ENCODE measurements at regions of chr19 and their contacts with region 1.

Region 1: GRCh38 chr19:20167020-20167644 is at the start of gene ZNF486:
- DNase-seq: peak; percentile 92
- H3K4me3 Mint-ChIP-seq: peak within 1 kb of the TSS; percentile 95
- H3K27ac Mint-ChIP-seq: peak within 1 kb of the TSS; percentile 87
- H3K4me1 Mint-ChIP-seq: peaks cover 20% of the 10 kb centered on the region
- H3K27me3 Mint-ChIP-seq: no peaks in the 10 kb centered on the region
- total RNA-seq, gene ZNF486: 7.3 to 8.7 TPM

Region 2: GRCh38 chr19:19821366-19821951 is 345.7 kb before region 1 on chr19 and contains the start of gene ZNF506:
- CTCF ChIA-PET with region 1: no interaction called
- POLR2A ChIA-PET with region 1: interaction called, 18 read pairs
- DNase-seq: peak; percentile 96
- H3K4me3 Mint-ChIP-seq: peak within 1 kb of the TSS; percentile 99
- H3K27ac Mint-ChIP-seq: peak within 1 kb of the TSS; percentile 99
- H3K4me1 Mint-ChIP-seq: peaks cover 29% of the 10 kb centered on the region
- H3K27me3 Mint-ChIP-seq: no peaks in the 10 kb centered on the region
- total RNA-seq, gene ZNF506: 24.6 to 25.5 TPM

Region 3: DNA sequence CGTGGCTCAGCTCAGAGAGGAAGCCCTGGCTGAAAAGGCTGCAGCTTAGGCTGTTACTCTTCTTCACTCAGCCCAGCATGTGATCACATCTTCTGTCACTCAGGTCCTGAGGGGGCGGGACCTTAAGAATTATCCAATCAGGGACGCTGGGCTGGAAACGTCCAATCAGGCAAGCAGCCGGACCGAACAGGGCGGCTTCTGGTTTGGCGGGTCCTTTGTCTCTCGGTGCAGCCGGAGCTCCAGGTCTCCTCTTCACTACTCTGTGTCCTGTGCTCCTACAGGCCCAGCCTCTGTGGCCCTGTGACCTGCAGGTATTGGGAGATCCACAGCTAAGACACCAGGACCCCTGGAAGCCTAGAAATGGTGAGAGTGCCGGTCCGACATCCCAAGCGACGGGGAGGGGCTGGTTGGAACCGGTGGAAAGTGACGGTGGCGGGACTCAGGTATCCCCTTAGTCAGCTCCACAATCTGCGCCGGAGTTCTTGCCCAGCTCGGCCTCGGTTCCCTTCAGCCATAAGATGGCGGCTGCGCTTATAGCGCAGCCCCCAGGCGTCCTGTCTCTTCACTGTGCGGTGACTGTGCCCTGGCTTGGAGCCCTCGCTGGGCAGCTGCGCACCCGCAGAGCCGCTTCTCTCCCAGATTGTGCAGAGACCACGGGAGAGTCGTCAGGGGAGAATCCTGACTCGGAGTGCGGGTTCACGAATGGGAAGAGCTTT is 266.2 kb before region 1 on chr19 and contains the start of gene ZNF93:
- CTCF ChIA-PET with region 1: no interaction called
- POLR2A ChIA-PET with region 1: interaction called, 12 read pairs
- DNase-seq: peak; percentile 93
- H3K4me3 Mint-ChIP-seq: peak within 1 kb of the TSS; percentile 96
- H3K27ac Mint-ChIP-seq: peak within 1 kb of the TSS; percentile 93
- H3K4me1 Mint-ChIP-seq: peaks cover 31% of the 10 kb centered on the region
- H3K27me3 Mint-ChIP-seq: no peaks in the 10 kb centered on the region
- total RNA-seq, gene ZNF93: 11.4 to 11.7 TPM

Region 4: DNA sequence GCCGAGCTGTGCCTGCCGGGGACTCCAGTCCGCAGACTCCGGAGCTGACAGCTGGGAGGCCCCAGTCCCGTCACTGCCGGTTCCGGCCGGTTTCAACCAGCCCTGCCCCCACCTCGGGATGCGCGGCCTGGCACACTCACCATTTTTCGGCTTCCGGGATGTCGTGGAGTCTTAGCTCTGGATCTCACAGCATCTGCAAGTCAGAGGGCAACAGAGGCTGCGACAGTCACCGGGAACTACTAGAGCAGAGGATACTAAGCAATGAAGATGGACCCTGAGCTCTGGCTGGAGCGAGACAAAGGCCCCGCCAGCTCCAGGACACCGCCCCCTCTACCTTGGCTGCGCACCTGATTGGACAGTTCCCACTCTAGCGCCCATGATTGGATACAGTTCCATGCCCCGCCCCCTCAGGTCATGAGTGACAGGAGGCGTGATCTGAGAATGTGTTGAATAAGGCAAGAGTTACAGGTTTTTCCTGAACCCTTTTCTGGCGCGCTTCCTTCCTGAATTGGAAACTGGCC is 127.9 kb before region 1 on chr19 and contains the start of gene ZNF682:
- CTCF ChIA-PET with region 1: no interaction called
- POLR2A ChIA-PET with region 1: interaction called, 10 read pairs
- DNase-seq: peak; percentile 92
- H3K4me3 Mint-ChIP-seq: peak within 1 kb of the TSS; percentile 92
- H3K27ac Mint-ChIP-seq: peak within 1 kb of the TSS; percentile 89
- H3K4me1 Mint-ChIP-seq: peaks cover 20% of the 10 kb centered on the region
- H3K27me3 Mint-ChIP-seq: no peaks in the 10 kb centered on the region
- total RNA-seq, gene ZNF682: 4.8 to 5.5 TPM

Region 5: DNA sequence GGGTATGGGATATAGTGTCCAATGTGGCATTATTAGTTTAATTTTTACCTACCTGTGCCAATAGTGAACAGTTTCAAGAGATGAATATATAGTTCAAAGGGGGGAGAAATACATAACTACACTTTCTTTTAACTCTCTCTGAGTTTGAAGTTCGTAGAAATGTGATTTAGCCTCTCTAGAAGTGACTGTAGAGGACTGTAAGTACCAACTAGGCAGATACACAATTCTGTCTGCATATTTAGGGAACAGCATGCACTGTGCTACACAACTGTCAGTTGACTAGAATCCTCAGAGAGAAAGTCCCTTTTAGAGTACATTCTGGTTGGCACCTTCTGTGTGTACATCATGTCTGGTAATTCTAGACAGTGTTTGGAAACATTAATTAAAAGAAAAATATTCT is 106.8 kb before region 1 on chr19:
- CTCF ChIA-PET with region 1: no interaction called
- POLR2A ChIA-PET with region 1: no interaction called
- DNase-seq: no peak
- H3K4me3 Mint-ChIP-seq: no peak overlapping the region
- H3K27ac Mint-ChIP-seq: no peak overlapping the region
- H3K4me1 Mint-ChIP-seq: no peaks in the 10 kb centered on the region
- H3K27me3 Mint-ChIP-seq: no peaks in the 10 kb centered on the region

Region 6: GRCh38 chr19:20077791-20078463 is 89.2 kb before region 1 on chr19 and contains the start of gene ZNF90:
- CTCF ChIA-PET with region 1: no interaction called
- POLR2A ChIA-PET with region 1: interaction called, 17 read pairs
- DNase-seq: peak; percentile 87
- H3K4me3 Mint-ChIP-seq: peak within 1 kb of the TSS; percentile 87
- H3K27ac Mint-ChIP-seq: peak within 1 kb of the TSS; percentile 65
- H3K4me1 Mint-ChIP-seq: peaks cover 18% of the 10 kb centered on the region
- H3K27me3 Mint-ChIP-seq: no peaks in the 10 kb centered on the region
- total RNA-seq, gene ZNF90: 7.8 to 8.5 TPM

Region 7: DNA sequence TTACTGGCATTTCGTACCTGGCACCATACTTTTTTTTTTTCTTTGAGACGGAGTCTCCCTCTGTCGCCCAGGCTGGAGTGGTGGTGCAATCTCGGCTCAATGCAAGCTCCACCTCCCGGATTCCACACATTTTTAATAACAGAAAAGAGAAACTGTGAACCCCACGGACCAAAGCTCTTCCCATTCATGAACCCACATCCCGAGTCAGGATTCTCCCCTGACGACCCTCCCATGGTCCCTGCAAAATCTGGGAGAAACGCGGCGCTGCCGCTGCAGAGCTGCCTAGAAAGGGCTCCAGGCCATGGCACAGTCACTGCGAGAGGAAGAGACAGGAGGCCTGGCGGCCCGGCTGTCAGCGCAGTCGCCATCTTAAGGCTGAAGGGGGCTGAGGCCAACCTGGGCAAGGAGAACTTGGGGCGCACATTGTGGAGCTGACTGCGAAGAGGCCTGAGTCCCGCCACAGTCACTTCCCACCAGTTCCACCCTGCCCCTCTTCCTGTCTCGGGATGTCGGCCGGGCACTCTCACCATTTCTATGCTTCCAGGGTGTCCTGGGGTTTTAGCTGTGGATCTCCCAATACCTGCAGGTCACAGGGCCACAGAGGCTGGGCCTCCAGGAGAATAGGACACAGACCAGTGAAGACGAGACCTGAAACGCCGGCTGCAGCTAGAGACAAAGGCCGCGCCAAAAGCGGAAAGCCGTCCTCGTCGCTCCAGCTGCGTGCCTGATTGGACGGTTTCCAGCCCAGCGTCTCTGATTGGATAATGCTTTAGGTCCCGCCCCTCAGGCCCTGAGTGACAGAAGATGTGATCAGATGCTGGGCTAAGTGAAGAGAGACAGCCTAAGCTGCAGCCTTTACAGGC is 70.9 kb after region 1 on chr19:
- CTCF ChIA-PET with region 1: interaction called, 3 read pairs
- POLR2A ChIA-PET with region 1: interaction called, 32 read pairs
- DNase-seq: peak; percentile 88
- H3K4me3 Mint-ChIP-seq: peak overlapping the region; percentile 87
- H3K27ac Mint-ChIP-seq: peak overlapping the region; percentile 82
- H3K4me1 Mint-ChIP-seq: peaks cover 10% of the 10 kb centered on the region
- H3K27me3 Mint-ChIP-seq: no peaks in the 10 kb centered on the region

Region 8: GRCh38 chr19:20423381-20424197 is 256.5 kb after region 1 on chr19:
- CTCF ChIA-PET with region 1: no interaction called
- POLR2A ChIA-PET with region 1: interaction called, 13 read pairs
- DNase-seq: peak; percentile 42
- H3K4me3 Mint-ChIP-seq: peak overlapping the region; percentile 97
- H3K27ac Mint-ChIP-seq: peak overlapping the region; percentile 97
- H3K4me1 Mint-ChIP-seq: peaks cover 13% of the 10 kb centered on the region
- H3K27me3 Mint-ChIP-seq: no peaks in the 10 kb centered on the region

Region 9: GRCh38 chr19:20503476-20503875 is 336.3 kb after region 1 on chr19:
- CTCF ChIA-PET with region 1: no interaction called
- POLR2A ChIA-PET with region 1: no interaction called
- DNase-seq: no peak
- H3K4me3 Mint-ChIP-seq: no peak overlapping the region
- H3K27ac Mint-ChIP-seq: no peak overlapping the region
- H3K4me1 Mint-ChIP-seq: no peaks in the 10 kb centered on the region
- H3K27me3 Mint-ChIP-seq: no peaks in the 10 kb centered on the region

Measured in activated CD4-positive, alpha-beta memory T cell treated with anti-CD3 and anti-CD28 coated beads, Interleukin-2, amount 10 ng/mL, durations not matched to agents 7 days and 5 days (primary cell).